ENCODE measurements at regions of chr2 and their contacts with region 1.

Region 1: GRCh38 chr2:159807183-159808031 is 9.4 kb upstream of the CD302 start:
- DNase-seq: peak; percentile 52
- ATAC-seq: peak; percentile 81
- H3K4me3 ChIP-seq: no peak overlapping the region
- H3K27ac ChIP-seq: no peak overlapping the region
- H3K4me1 ChIP-seq: no peaks in the 10 kb centered on the region
- H3K27me3 ChIP-seq: no peaks in the 10 kb centered on the region
- CTCF ChIP-seq: peak; percentile 74 to 78 (median 76)
- POLR2A ChIP-seq: no peak
- RAD21 ChIP-seq: peak; percentile 79

Region 2: GRCh38 chr2:159557451-159558034 is 249.9 kb before region 1 on chr2:
- CTCF ChIA-PET with region 1: interaction called, 3 read pairs
- POLR2A ChIA-PET with region 1: no interaction called
- RAD21 ChIA-PET with region 1: no interaction called
- intact Hi-C with region 1: loop called (anchors 5 kb)
- DNase-seq: peak; percentile 16
- ATAC-seq: peak; percentile 68; the same call in 1 of the 2 replicates
- H3K4me3 ChIP-seq: no peak overlapping the region
- H3K27ac ChIP-seq: no peak overlapping the region
- H3K4me1 ChIP-seq: no peaks in the 10 kb centered on the region
- H3K27me3 ChIP-seq: no peaks in the 10 kb centered on the region
- CTCF ChIP-seq: peak; percentile 53 to 64 (median 59); a peak in 5 of 6 replicates
- POLR2A ChIP-seq: no peak
- RAD21 ChIP-seq: peak; percentile 80

Region 3: DNA sequence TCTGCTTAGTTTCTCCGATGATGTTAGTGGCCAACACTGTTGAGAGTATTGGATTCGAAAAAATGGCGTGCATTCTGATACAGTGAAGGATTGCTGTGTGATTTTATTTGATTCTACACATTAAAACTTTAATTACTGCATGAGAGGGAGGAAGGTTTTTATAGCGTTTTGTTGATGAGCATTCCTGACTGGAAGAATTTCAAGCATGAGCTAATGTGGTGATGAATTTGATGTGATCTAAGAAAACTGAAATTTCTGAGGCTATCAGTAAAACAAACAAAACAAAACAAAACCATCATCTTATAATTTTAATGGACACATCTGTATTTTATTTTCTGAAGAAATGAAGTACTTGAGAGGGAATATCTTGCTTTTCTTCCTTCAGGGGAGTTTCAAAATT is 333.1 kb after region 1 on chr2:
- CTCF ChIA-PET with region 1: no interaction called
- POLR2A ChIA-PET with region 1: no interaction called
- RAD21 ChIA-PET with region 1: no interaction called
- intact Hi-C with region 1: no loop called
- DNase-seq: no peak
- ATAC-seq: no peak
- H3K4me3 ChIP-seq: no peak overlapping the region
- H3K27ac ChIP-seq: no peak overlapping the region
- H3K4me1 ChIP-seq: no peaks in the 10 kb centered on the region
- H3K27me3 ChIP-seq: no peaks in the 10 kb centered on the region
- CTCF ChIP-seq: no peak
- POLR2A ChIP-seq: no peak
- RAD21 ChIP-seq: no peak

Measured in HCT116 (cell line).